Panc1 (cell line): ENCODE measurements at regions of chr9 and their contacts with region 1.

Region 1: DNA sequence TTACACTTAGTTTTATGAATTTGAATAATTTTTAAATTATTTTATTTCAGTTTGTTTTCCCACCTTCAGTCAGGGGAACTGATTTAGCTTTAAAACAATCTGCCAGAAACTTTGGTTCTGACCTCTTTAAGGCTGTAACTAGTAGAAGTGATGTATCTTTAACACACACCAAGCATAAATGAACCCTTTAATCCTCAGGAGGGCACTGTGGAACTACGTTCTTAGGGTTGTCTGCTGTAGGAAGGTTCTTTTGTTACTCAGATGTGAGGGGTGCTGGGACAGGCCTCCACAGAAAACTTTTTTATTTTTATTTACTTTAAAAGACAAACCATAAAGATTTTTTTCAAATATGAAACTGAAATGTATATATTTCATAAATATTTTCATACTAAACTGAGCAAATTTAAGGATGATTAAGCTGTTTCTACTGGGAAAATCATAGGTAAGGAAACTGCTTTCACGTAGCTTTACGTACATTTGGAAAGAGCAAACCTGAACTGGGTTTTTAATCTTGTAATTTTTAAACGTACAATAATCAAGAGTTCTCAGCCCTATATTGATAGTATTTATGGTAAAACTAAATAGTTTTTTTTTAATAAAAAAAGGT is 5.3 kb downstream of the KLF4 start:
- DNase-seq: no peak
- ATAC-seq: peak; percentile 63; the same call in 1 of the 2 replicates
- H3K4me3 ChIP-seq: no peak overlapping the region
- H3K27ac ChIP-seq: no peak overlapping the region
- H3K4me1 ChIP-seq: no peaks in the 10 kb centered on the region
- H3K27me3 ChIP-seq: no peaks in the 10 kb centered on the region
- CTCF ChIP-seq: peak; percentile 66; the same call in 1 of the 2 replicates

Region 2: DNA sequence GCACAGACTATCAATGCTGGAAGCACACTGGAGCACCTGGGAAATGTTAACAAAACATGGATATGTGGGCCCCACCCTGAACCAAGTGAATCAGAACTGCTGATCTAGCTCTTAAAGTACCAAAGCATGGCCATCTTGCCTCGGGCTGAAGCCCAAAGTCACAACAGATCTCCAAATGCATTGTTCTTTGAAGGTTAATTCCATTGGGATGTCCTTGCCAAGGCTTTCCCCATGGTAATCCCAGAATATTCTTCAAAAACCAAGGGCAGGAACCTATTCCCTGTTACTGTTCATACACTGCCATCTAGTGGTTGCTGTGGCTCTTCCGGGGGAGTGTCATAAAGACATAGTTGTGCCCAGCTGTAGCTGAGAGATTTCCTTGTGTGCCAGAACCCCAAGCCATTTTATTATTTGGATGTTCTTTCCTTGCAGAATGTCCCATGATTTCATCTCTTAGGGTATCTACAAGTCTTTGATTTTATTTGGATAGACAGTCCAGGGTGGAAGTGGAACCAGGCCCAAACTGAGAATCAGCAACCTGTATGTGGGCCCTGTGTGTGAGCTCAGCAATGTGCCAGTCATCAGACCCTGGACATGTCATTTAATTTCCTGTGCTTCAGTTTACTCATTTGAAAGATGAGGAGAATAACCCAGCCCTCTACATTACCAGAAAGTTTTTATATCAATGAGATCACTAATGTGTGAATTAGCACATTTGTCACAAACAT is 1081.6 kb after region 1 on chr9:
- CTCF ChIA-PET with region 1: no interaction called
- POLR2A ChIA-PET with region 1: no interaction called
- in situ Hi-C with region 1: no loop called
- intact Hi-C with region 1: loop called (anchors 5 kb)
- DNase-seq: peak; percentile 61
- ATAC-seq: peak; percentile 91
- H3K4me3 ChIP-seq: no peak overlapping the region
- H3K27ac ChIP-seq: no peak overlapping the region
- H3K4me1 ChIP-seq: no peaks in the 10 kb centered on the region
- H3K27me3 ChIP-seq: no peaks in the 10 kb centered on the region
- CTCF ChIP-seq: peak; percentile 76